Activated CD4-positive, alpha-beta T cell treated with anti-CD3 and anti-CD28 coated beads, Interleukin-2, amount 10 ng/mL, durations not matched to agents 7 days and 5 days (primary cell): ENCODE measurements at regions of chr7 and their contacts with region 1.

Region 1: GRCh38 chr7:142459551-142459963 is 201.7 kb upstream of the PRSS58 start:
- DNase-seq: peak; percentile 45
- H3K4me3 Mint-ChIP-seq: no peak overlapping the region
- H3K27ac Mint-ChIP-seq: no peak overlapping the region
- H3K4me1 Mint-ChIP-seq: peaks cover 63% of the 10 kb centered on the region
- H3K27me3 Mint-ChIP-seq: no peaks in the 10 kb centered on the region

Region 2: GRCh38 chr7:142478479-142479072 is 19.0 kb after region 1 on chr7:
- CTCF ChIA-PET with region 1: interaction called, 16 read pairs
- POLR2A ChIA-PET with region 1: no interaction called
- DNase-seq: peak; percentile 48
- H3K4me3 Mint-ChIP-seq: no peak overlapping the region
- H3K27ac Mint-ChIP-seq: peak overlapping the region; percentile 28
- H3K4me1 Mint-ChIP-seq: peaks cover 65% of the 10 kb centered on the region
- H3K27me3 Mint-ChIP-seq: no peaks in the 10 kb centered on the region